WTC11 (cell line): ENCODE measurements at regions of chr19 and their contacts with region 1.

Region 1: DNA sequence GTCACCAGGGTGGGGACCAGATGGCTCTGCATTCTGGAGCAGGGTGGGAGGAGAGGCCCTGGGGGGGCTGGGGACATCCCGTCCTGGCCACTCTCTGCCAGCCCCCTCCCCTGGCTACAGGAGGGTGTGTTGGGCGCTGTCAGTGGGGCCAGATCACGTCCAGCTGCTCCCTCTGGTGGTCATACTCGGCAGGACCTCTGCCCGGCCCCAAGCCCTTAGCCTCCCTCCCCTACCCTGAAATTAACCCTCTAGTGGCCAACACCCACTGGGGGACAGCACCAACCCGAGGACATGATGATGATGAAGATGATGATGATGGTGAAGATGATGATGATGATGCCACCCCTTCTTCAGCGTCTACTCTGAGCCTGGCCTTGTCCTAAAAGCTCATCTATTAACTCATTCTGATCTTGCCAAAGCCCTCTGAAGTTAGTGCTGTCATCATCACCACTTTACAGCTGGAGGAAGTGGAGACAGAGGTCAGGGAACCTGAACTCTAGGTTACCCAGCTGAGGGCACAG is 590 bp upstream of the LGI4 start:
- DNase-seq: peak; percentile 88
- ATAC-seq: peak; percentile 91
- H3K4me3 Mint-ChIP-seq: peak overlapping the region; percentile 10; the same call in 1 of the 2 replicates
- H3K27ac Mint-ChIP-seq: no peak overlapping the region
- H3K4me1 Mint-ChIP-seq: peaks cover 21% of the 10 kb centered on the region
- H3K27me3 Mint-ChIP-seq: peaks cover 9% of the 10 kb centered on the region
- CTCF ChIP-seq: peak; percentile 93

Region 2: DNA sequence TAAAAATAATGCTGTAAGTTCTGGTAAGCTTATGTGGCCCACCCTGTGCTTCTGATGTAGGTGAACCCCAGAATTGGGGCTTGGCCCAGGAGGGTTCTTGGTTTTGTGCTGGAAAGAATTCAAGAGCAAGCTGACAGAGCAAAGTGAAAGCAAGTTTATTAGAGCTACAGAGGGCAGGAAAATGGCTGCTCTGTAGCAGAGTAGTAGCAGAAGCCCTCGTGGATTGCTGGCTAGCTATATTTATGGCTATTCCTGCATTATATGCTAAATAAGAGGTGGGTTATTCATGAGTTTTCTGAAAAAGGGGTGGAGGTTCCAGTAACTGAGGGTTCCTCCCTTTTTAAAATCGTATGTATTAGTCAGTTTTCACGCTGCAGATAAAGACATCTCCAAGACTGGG is 341.9 kb before region 1 on chr19:
- CTCF ChIA-PET with region 1: no interaction called
- POLR2A ChIA-PET with region 1: no interaction called
- DNase-seq: no peak
- ATAC-seq: no peak
- H3K4me3 Mint-ChIP-seq: no peak overlapping the region
- H3K27ac Mint-ChIP-seq: no peak overlapping the region
- H3K4me1 Mint-ChIP-seq: 0 out of 2 replicates have a peak, but pooled peaks cover 2% of the 10 kb centered on the region
- H3K27me3 Mint-ChIP-seq: peaks cover 62% of the 10 kb centered on the region
- CTCF ChIP-seq: no peak

Region 3: DNA sequence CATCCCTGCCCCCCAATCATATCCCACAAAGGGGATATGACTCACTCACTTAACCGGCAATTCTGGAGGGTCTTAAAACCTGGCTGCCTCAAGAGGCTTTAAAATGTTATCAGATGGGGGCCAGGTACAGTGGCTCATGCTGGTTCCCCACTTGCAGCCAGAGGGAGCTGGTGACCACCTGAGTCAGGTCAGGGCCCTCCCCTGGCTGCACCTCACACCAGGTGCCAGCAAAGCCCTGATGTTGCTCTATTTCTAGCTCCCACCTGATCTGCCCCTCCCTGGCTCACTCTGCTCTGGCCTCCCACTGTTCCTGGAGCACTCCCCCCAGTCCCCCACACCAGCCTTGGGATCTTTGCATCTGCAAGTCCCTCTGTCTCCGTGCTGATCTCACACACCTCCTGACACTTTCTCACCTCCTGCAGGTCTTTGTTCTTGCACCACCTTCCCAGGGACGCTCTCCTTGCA is 79.7 kb before region 1 on chr19:
- CTCF ChIA-PET with region 1: interaction called, 37 read pairs
- POLR2A ChIA-PET with region 1: no interaction called
- DNase-seq: peak; percentile 83
- ATAC-seq: peak; percentile 96
- H3K4me3 Mint-ChIP-seq: peak overlapping the region; percentile 18
- H3K27ac Mint-ChIP-seq: peak overlapping the region; percentile 43; the same call in 1 of the 2 replicates
- H3K4me1 Mint-ChIP-seq: peaks cover 19% of the 10 kb centered on the region
- H3K27me3 Mint-ChIP-seq: no peaks in the 10 kb centered on the region; the same call in 1 of the 2 replicates
- CTCF ChIP-seq: peak; percentile 36

Region 4: DNA sequence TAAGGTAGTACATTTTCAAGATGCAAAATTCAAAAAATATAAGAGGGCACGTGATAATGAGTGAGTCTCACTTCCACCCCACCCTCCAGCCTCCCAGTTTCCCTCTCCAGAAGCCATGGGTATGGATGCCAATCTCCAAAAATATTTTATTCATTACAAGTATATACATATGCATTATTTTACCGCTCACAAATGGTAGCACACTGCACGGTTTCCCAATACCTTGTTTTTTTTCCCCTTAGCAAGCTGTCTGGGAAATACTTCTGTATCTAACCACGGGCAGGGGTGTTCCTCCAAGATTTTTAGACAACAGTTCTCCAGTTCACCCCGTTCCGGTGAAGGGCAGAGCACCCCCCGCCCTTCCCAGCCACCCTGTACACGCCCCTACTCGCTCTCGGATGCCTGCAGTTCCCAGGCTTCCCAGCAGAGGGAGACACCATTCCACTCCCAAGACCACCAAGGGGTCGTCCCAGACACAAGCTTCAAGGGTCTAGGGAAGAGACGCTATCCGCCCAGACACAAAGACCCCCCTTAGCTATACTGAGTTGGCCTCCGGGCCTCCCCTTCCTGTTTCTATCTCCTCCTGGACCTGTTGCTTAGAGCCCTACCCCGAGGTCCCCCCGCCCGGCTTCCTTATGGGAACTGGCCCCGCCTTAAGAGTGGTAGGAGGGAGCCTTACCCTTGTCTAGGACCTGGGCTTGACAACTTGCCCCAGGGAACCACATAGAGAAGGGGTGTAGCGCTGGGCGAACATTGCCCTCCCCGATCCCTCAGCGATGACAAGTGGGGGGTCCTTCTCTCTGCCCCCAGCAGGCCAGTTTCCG is 20.9 kb before region 1 on chr19:
- CTCF ChIA-PET with region 1: interaction called, 54 read pairs
- POLR2A ChIA-PET with region 1: no interaction called
- DNase-seq: peak; percentile 92
- ATAC-seq: peak; percentile 82
- H3K4me3 Mint-ChIP-seq: peak overlapping the region; percentile 65
- H3K27ac Mint-ChIP-seq: no peak overlapping the region
- H3K4me1 Mint-ChIP-seq: peaks cover 46% of the 10 kb centered on the region
- H3K27me3 Mint-ChIP-seq: peaks cover 3% of the 10 kb centered on the region
- CTCF ChIP-seq: peak; percentile 99

Region 5: DNA sequence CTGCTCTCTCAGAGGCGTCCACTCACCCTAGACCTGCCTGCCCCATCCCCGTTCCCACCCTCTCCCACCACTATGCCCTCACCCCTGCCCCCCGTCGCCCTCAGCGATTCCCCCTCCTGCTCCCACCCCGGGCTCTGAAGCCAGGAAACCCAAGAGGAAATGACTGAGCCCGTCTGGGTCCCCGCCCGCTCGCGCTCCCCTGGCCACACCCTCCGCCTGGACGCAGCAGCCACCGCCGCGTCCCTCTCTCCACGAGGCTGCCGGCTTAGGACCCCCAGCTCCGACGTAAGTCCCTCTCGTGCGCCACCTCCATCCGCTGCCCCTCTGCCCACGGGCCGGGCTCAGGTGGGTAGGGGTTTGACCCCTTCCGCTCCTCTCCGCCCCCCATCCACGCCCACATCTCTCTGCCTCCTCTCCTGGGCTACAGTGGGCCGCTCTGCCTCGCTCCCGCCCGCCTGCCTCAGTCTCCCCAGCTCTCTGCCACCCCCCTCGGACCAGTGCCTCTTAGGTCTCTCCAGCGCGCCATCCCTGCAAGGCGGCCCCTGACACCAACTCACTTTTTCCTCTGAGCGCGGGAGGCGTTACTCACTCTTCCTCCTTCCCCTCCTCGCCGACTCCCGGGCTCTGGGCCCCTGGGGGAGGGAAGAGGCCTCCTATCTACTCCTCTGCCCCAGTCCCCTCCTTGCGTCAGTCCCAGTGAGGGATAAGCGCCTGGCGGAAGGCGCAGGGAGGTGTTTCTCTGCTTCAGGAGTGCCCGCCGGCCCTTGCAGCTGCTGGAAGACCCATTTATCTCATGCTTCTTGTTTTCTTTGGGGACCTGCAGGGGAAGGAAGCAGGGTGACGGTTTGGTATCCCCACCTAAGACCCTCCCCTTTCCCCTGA is 19.3 kb after region 1 on chr19 and contains the start of gene FXYD5:
- CTCF ChIA-PET with region 1: interaction called, 24 read pairs
- POLR2A ChIA-PET with region 1: no interaction called
- DNase-seq: peak; percentile 64
- ATAC-seq: peak; percentile 45
- H3K4me3 Mint-ChIP-seq: peak within 1 kb of the TSS; percentile 97
- H3K27ac Mint-ChIP-seq: peak within 1 kb of the TSS; percentile 58
- H3K4me1 Mint-ChIP-seq: peaks cover 53% of the 10 kb centered on the region
- H3K27me3 Mint-ChIP-seq: no peaks in the 10 kb centered on the region; the same call in 1 of the 2 replicates
- CTCF ChIP-seq: no peak
- total RNA-seq, gene FXYD5: 114 to 135 TPM (median 128 TPM) in 3 replicates